ENCODE measurements at regions of chr17 and their contacts with region 1.

Region 1: DNA sequence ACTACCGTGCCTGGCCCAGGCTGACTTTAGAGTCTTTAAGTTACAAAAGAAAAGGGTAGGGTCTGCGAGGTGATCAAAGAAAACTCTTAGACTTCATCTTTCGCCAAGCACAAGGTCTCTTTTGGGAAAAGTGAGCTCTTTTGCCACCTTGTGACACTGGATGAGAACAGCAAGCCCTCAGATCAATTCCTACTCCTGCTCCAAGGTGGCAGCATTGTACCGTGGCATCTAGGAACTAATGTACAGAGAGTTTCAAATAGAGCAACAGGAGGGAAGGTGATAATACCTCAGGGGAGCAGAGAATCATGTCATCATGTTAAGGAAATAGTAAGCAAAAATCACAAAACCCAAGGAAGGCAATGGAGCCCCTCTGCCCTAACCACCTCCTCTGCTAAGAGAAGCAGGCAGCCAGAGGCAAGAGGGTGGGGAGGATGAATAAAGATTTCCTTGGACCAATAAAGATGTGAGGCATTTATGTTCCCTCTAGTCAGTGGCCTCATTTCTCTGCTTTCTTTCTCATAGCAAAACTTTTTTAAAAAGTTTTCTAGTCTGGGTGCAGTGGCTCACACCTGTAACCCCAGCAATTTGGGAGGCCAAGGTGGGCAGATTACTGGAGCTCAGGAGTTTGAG is 2.1 kb upstream of the C17orf78 start:
- DNase-seq: peak; percentile 78
- H3K27ac ChIP-seq: peak overlapping the region; percentile 8; the same call in 1 of the 2 replicates
- CTCF ChIP-seq: peak; percentile 99

Region 2: DNA sequence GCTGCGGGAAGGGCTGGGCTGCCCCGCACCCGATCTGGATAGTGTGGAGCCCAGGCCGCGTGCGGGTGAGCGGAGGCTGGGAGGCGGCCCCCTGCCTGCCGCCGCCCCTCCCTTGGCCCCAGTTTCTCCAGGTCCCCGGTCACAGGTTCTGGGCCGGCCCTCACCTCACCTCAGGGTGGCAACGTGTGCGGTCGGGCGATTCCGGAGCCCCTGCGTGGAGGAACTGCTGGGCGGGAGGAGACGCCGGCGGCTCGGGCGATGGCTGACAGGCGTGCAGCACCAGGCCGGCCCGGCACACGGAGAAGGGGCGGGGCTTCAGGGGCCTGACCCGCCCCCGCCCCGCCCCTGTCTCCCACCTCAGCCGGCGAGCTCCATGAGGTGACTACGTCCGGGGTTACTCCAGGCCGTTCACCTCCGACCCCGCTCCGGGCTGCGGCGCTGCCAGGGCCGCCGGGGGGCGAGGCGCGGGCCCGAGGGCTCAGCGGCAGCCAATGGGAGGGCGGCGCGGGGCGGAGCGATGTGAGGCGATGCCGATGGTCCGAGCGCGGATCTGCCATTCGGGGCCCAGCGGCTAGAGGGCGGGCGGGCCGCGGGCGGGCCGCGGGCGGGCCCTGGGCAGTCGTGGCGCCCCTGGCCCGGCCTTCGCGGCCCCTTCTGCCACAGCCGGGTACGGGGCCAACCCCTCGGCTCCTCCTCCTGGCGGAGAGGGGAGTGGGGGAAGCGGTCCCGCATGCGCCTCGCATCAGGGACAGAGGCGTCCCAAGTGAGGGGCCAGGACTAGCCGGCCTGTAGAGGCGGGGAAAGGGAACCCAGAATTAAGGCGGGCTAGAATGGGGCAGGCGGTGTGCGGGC is 14.6 kb before region 1 on chr17:
- CTCF ChIA-PET with region 1: interaction called, 13 read pairs
- POLR2A ChIA-PET with region 1: no interaction called
- DNase-seq: peak; percentile 92
- H3K27ac ChIP-seq: peak overlapping the region; percentile 97
- CTCF ChIP-seq: peak; percentile 25; the same call in 1 of the 2 replicates